PC-3 (cell line): ENCODE measurements at regions of chr21 and their contacts with region 1.

Region 1: GRCh38 chr21:23887725-23888306 is 1719.5 kb downstream of the MRPL39 start:
- DNase-seq: no peak
- ATAC-seq: no peak
- H3K4me3 ChIP-seq: no peak overlapping the region
- H3K27ac ChIP-seq: no peak overlapping the region
- H3K4me1 ChIP-seq: peaks cover 4% of the 10 kb centered on the region; the same call in 1 of the 2 replicates
- H3K27me3 ChIP-seq: no peaks in the 10 kb centered on the region
- CTCF ChIP-seq: no peak

Region 2: GRCh38 chr21:23921670-23922418 is 34.0 kb after region 1 on chr21:
- CTCF ChIA-PET with region 1: no interaction called
- POLR2A ChIA-PET with region 1: no interaction called
- intact Hi-C with region 1: no loop called
- DNase-seq: no peak
- ATAC-seq: no peak
- H3K4me3 ChIP-seq: no peak overlapping the region
- H3K27ac ChIP-seq: no peak overlapping the region
- H3K4me1 ChIP-seq: no peaks in the 10 kb centered on the region
- H3K27me3 ChIP-seq: no peaks in the 10 kb centered on the region
- CTCF ChIP-seq: no peak

Region 3: DNA sequence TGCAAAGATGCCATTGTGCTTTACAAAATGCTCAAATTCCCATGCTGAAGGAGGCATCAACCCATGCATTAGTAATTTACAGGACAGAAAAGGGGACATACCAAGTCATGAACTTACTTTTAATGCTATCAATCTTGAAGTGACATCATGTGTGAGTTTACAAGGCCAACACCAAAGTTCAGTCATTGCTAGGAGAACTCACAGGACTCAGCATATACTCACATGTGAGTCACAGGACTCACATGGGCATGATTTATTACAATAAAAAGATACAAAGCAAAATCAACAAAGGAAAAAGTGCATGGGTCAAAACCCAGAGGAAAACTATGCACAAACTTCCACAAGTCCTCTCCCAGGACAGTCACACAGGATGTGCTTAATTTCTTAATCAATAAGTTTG is 63.4 kb after region 1 on chr21:
- CTCF ChIA-PET with region 1: no interaction called
- POLR2A ChIA-PET with region 1: no interaction called
- intact Hi-C with region 1: loop called (anchors 2 kb)
- DNase-seq: peak; percentile 90
- ATAC-seq: peak; percentile 95
- H3K4me3 ChIP-seq: no peak overlapping the region
- H3K27ac ChIP-seq: peak overlapping the region; percentile 84
- H3K4me1 ChIP-seq: peaks cover 27% of the 10 kb centered on the region
- H3K27me3 ChIP-seq: no peaks in the 10 kb centered on the region
- CTCF ChIP-seq: no peak